HEK293 (cell line): ENCODE measurements at regions of chr12 and their contacts with region 1.

Region 1: DNA sequence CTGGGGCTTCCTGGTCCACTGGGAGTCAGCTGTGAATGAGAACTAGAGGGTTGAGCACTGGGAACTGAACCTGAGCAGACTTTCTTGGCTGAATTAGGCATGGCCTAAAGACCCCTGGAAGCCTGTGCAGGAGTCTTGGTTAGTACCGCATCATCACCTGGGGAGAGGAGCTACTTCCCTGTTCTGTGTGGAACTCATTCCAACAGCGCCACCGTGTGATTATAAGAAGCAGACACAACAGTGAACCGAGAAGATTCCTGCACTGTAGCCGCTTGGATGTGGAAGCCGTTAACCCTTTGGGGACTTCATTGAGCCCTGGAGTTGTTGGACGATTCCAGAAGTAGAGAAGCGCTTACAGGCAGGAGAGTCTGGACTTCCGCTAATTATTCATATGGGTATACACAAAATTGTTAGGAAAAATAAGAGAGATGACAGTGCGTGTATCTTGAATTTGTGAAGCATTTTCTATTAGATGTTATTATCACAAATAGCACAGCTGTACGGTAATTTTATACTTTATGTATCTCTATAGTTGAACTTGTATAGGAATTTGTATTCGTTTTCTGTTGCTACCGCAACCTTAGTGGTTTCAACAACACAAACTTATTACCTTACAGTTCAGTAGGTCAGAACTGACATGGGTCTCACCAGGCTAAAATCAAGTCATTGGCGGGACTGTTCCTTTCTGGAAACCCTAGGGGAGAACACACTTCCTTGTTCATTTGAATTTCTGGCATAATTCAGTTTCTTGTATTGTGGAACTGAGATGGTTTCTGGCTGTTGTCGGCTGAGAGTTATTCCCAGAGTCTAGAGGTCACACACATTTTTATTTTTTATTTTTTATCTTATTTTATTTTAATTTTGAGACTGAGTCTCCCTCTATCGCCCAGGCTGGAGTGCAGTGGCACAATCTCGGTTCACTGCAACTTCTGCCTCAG is 100.7 kb downstream of the C2CD5 start:
- H3K4me3 ChIP-seq: no peak overlapping the region
- H3K27ac ChIP-seq: no peak overlapping the region
- H3K4me1 ChIP-seq: no peaks in the 10 kb centered on the region
- CTCF ChIP-seq: peak; percentile 65

Region 2: DNA sequence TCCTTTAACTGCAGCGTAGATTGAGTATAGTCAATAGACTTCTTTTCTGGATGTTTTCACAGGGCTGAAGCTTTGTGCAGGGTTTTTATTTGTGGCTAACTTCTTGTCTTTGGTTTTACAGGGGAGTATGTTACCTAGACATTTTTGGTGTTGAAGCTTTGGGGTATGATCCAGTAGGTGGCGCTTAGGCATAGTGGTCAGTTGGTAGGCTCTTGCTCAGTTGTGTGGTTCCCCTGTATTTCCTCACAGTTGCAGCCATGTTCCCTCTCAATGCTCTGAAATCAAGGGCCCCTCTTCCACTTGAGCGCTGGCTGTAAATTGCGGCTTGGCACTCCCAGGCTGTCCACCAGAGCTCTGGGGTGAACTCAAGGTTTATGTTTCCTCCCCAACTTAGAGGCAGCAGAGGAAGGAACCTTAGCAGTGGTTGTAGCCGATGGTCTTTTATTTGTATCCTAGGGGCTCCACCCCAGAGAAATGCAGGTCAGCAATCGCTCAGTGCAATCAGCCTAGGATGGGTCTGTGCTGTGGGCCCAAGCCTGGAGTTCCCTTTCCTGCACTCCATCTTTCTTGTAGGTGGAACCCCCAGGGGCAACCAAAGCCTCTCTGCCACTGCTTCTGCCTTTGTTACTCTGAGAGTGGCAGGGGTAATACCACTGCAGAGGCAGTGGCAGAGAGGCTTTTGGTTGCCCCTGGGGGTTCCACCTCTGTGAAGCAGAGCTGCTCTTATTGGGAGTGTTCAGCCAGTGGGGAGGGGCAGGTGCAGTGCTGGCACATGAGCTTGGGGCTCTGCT is 342.5 kb before region 1 on chr12:
- CTCF ChIA-PET with region 1: interaction called, 11 read pairs
- POLR2A ChIA-PET with region 1: no interaction called
- H3K4me3 ChIP-seq: no peak overlapping the region
- H3K27ac ChIP-seq: no peak overlapping the region
- H3K4me1 ChIP-seq: no peaks in the 10 kb centered on the region
- CTCF ChIP-seq: no peak